Activated T-helper 1 cell treated with anti-CD3 and anti-CD28 coated beads, Interleukin-12 subunit alpha, Interleukin-12 subunit beta, Interleukin-2, Interleukin-4 antibody, amounts not matched to agents 30 ng/mL and 10 ng/mL and 1 ng/mL, durations not matched to agents 14 hours and 24 hours and 36 hours (primary cell): ENCODE measurements at regions of chr12 and their contacts with region 1.

Region 1: DNA sequence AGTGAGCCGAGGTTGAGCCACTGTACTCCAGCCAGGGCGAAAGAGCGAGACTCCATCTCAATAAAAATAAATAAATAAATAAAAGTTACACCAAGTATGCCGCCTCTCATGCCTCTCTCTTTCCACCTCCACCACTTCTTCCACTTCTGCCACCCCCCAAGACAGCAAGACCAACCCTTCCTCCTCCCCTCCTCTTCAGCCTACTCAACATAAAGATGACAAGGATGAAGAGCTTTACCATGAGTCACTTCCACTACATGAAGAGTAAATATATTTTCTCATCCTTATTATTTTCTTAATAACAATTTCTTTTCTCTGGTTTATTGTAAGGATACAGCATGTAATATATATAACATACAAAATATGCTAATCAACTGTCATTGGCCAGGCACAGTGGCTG is 3.6 kb upstream of the TMED2 start:
- DNase-seq: no peak
- H3K4me3 Mint-ChIP-seq: no peak overlapping the region
- H3K27ac Mint-ChIP-seq: no peak overlapping the region
- H3K4me1 Mint-ChIP-seq: peaks cover 18% of the 10 kb centered on the region
- H3K27me3 Mint-ChIP-seq: no peaks in the 10 kb centered on the region

Region 2: DNA sequence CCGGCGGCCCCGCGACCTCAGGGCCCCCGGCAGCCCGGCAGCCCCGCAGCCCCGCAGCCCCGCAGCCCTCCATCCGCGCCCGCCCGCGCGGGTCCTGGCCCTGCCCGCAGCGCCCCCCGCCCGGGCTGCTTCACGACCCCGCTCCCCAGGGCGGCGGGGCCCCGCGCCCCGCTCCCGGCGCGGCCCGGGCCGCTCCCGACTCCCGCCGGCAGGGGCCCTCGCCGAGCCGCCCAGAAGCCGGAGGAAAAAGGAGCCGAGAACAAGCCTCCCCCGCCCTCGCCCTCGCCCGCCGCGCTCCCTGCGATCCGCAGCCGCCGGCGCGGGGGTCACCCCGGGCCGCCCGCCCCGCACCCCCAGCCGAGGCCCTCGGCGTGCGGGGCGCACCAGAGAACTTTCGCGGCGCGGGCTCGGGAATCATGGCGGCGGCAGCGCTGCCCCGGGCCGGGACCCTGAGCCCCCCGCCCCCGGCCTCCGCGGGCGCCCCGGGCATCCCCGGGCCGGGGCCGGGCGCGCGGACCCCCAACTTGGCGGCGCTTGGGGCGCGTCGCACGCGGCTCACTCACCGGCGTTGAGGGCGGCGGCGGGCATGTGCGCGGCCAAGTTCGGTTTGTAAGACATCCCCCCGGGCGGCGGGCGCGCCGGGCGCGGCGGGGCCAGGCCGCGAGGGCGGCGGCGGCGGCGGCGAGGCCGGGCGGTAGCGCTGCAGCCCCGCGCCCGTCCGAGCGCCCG is 309.6 kb before region 1 on chr12:
- intact Hi-C with region 1: loop called (anchors 1 kb)
- DNase-seq: peak; percentile 68
- H3K4me3 Mint-ChIP-seq: no peak overlapping the region
- H3K27ac Mint-ChIP-seq: no peak overlapping the region
- H3K4me1 Mint-ChIP-seq: peaks cover 9% of the 10 kb centered on the region
- H3K27me3 Mint-ChIP-seq: peaks cover 5% of the 10 kb centered on the region

Region 3: DNA sequence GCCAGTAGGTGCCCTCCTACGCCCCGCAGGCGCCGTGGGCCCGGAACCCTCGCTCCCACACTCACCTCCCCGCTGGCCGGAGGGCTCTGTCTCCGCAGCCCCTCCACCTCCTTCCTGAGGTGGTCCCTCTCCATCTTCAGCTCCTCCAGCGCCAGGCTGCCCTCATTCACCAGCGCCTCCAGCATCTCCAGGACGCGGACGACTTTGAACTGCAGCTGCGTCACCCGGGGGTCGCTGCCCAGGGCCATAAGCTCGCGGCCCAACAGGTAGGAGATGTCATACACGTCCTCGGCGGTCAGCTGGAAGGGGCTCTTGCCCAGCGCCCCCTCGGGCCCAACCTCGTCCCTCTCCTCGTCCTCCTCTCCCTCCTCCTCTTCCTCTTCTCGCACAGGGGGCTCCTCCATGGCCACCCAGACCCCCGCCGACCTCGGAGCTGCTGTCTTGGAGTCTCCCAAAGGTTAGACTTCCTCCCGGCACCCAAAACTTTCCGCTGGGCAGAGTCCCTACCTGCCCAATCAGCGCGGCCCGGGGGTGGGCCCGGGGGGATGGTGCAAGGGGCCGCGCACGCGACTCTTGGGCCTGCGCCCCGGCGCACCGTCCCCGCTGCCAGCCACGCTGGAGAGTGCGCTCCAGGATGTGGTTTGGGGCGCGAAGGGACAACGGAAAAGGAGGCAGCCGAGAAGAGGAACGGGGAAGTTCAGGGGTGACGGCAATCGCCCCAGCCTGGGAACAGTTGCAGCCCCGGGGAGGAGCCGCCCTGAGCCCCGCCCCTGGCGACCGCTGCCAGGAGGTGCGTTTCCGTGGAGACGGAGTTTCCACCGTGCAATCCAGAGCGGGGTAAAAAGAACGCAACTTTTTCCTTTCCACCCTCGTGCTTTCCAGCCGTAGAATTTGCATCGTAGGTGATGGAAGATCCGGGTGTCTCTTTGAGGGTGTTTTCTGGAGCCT is 144.5 kb before region 1 on chr12 and contains the start of gene RILPL2:
- intact Hi-C with region 1: loop called (anchors 1 kb)
- DNase-seq: peak; percentile 91
- H3K4me3 Mint-ChIP-seq: peak within 1 kb of the TSS; percentile 99
- H3K27ac Mint-ChIP-seq: peak within 1 kb of the TSS; percentile 99
- H3K4me1 Mint-ChIP-seq: peaks cover 39% of the 10 kb centered on the region
- H3K27me3 Mint-ChIP-seq: no peaks in the 10 kb centered on the region
- total RNA-seq, gene RILPL2: 20.1 and 20.6 TPM in 2 replicates

Region 4: DNA sequence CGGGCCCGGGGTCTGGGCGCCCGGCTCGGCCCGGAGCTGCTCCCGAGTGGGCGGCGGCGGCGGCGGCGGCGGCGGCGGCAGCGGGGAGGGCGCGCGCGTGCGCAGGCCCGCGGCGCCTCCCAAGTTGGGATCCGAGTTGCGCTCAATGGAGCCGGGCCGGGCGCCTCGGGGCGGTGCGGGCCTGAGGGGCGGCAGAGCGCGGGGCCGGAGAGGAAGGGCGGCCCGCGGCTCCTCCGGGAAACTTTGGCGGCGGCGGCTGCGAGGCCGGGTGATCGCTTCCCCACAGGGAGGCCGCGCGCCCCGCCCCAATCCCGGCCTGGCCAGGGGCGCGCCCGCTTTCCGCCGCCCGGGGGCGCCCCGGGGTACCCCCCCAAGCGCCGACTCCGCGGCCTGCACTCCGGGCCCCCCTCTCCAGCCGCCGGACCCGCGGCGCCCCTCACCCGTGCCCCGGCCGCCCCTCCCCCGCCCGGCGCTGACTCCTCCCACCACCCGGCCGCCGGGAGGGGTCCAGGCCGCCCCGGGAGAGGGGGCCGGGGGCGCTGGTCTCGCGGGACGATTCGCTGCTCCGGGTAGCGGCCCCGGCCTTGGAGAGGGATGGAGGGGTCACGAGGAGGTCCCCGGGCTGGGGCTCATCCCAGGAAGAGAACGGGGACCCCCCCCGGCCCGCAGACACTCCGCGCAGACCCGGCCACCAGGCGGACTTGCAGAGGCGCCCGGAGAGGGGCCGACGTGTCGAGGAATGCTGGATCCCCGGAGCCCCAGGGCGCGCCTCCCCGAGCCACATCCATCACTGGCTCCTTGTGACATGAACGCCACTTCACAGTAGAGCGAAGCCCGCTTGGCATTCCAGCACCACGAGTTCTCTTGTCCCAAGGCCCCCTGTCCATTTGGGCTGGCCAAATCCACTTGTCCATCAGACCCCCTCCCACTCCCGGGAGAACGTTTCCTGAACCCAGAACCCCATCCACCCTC is 46.8 kb before region 1 on chr12 and contains the start of gene RILPL1:
- intact Hi-C with region 1: loop called (anchors 2 kb)
- DNase-seq: peak; percentile 22
- H3K4me3 Mint-ChIP-seq: peak within 1 kb of the TSS; percentile 85
- H3K27ac Mint-ChIP-seq: peak within 1 kb of the TSS; percentile 74
- H3K4me1 Mint-ChIP-seq: peaks cover 25% of the 10 kb centered on the region
- H3K27me3 Mint-ChIP-seq: peaks cover 18% of the 10 kb centered on the region
- total RNA-seq, gene RILPL1: 4.4 and 4.5 TPM in 2 replicates

Region 5: GRCh38 chr12:123633379-123634141 is 52.8 kb after region 1 on chr12 and contains the starts of genes EIF2B1 and GTF2H3:
- intact Hi-C with region 1: loop called (anchors 1 kb)
- DNase-seq: peak; percentile 96
- H3K4me3 Mint-ChIP-seq: peak within 1 kb of the TSS; percentile 98
- H3K27ac Mint-ChIP-seq: peak within 1 kb of the TSS; percentile 97
- H3K4me1 Mint-ChIP-seq: peaks cover 35% of the 10 kb centered on the region
- H3K27me3 Mint-ChIP-seq: no peaks in the 10 kb centered on the region
- total RNA-seq, gene EIF2B1: 74.8 and 76.5 TPM in 2 replicates
- total RNA-seq, gene GTF2H3: 65.8 and 66.1 TPM in 2 replicates